Posterior cingulate gyrus (tissue), 11 donors: ENCODE measurements at regions of chr6 and their contacts with region 1.

Region 1: GRCh38 chr6:165729307-165729936 is 66.4 kb upstream of the PDE10A start:
- DNase-seq: peak in 2 of 10 donors; percentile 31 to 37

Region 2: DNA sequence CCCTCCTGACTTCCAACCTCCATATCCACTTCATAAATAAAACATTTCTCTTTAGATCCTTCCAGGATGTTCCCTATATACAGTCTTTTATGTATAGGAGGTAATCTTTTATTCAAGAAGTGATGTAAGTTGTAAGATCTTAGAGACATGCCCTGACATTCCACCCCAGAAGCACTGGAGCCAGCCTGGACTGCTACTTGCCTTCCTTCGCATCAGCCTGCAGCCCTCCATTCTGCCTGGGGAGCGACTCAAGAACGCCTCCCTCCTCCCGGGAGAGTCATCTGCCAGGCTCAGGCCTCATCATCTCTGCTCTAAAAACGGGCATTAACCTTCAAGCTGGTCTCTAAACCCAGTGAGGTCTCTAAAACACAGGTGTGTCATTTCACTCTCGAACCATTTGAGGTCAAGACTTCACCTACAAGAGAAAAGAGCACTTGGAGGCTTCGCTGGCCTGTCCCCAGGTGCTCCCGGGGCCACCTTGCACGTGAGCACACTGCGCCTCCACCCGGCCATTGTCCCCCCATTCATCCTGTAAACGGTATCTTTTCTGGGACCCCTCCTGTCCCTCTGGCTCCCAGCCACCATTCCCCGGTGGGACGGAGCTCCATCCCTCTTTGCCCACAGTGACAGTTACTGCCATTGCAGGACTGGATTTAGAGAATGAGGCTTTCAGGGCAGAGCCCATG is 41.1 kb after region 1 on chr6:
- intact Hi-C with region 1: loop called (anchors 1 kb)
- DNase-seq: no peak

Region 3: DNA sequence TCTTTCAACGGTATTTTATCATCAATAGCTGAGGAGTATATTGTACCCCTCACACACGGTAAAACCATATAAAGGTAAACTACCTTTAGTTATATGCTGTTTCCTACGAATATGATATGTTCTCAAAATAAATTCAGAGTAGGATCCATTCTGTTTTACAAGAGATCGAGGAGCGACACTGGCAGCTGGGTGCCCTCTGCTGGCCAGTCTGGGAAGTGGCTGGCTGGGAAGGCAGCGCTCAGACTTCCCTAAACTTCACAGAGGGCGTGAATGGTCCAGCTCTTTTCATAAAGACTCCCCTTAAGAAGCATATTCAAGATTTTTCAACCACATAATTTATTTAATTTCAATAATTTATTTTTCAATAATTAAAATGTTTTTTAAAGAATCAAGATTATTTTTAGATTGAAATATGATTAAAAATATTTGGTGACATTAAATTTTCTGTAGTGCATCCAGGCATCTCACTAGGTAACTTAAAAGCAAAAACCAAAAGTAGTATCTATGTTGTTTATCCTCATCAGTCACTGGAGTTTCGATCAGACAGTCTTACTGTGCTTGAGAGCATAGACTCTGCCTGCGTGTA is 121.1 kb after region 1 on chr6:
- intact Hi-C with region 1: loop called (anchors 5 kb)
- DNase-seq: peak; percentile 73 to 97 (median 85)